ENCODE measurements at regions of chr16 and their contacts with region 1.

Region 1: GRCh38 chr16:69286941-69287713 is 24.0 kb upstream of the VPS4A start:
- DNase-seq: peak; percentile 34 to 63 (median 45)
- ATAC-seq: peak; percentile 50
- H3K4me3 ChIP-seq: no peak overlapping the region
- H3K27ac ChIP-seq: no peak overlapping the region
- H3K4me1 ChIP-seq: peaks cover 3% of the 10 kb centered on the region
- H3K27me3 ChIP-seq: no peaks in the 10 kb centered on the region
- CTCF ChIP-seq: peak; percentile 22 to 71 (median 65)
- POLR2A ChIP-seq: no peak

Region 2: DNA sequence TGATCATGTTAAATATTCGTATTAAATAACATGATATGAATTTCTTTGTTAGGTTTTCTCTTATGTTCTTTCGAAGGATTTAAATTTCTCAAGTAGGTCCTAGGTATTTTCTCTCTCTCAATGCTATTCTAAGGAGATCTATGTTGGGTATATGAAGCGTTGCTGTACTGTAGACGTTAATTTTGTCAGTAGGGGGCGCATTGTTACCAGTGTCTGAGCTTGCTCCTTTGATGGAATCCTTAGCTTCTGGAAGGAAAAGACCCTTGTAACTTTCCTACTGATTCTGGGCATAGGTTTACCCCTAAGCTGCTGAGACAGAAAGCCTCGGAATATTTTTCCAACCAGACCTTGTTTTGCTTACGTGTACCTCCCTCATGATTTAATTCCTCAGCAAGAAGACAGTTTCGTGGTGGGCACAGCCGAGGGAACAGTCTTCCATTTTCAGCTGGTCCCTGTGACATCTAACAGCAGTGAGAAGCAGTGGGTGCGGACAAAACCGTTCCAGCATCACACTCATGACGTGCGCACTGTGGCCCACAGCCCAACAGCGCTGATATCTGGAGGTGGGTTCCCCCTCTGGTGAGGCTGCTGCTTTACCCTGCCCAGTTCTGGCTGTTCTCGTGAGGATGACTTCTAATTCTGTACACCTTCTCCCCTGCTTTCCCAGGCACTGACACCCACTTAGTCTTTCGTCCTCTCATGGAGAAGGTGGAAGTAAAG is 136.8 kb before region 1 on chr16:
- intact Hi-C with region 1: loop called (anchors 2 kb)
- DNase-seq: peak; percentile 58 to 76 (median 63)
- ATAC-seq: peak; percentile 50
- H3K4me3 ChIP-seq: no peak overlapping the region
- H3K27ac ChIP-seq: no peak overlapping the region
- H3K4me1 ChIP-seq: peaks cover 10% of the 10 kb centered on the region
- H3K27me3 ChIP-seq: no peaks in the 10 kb centered on the region
- CTCF ChIP-seq: peak; percentile 66 to 83 (median 76)
- POLR2A ChIP-seq: no peak

Region 3: GRCh38 chr16:69204172-69204571 is 83.0 kb before region 1 on chr16:
- intact Hi-C with region 1: no loop called
- DNase-seq: no peak
- ATAC-seq: no peak
- H3K4me3 ChIP-seq: no peak overlapping the region
- H3K27ac ChIP-seq: no peak overlapping the region
- H3K4me1 ChIP-seq: peaks cover 4% of the 10 kb centered on the region
- H3K27me3 ChIP-seq: no peaks in the 10 kb centered on the region
- CTCF ChIP-seq: no peak
- POLR2A ChIP-seq: no peak

Region 4: DNA sequence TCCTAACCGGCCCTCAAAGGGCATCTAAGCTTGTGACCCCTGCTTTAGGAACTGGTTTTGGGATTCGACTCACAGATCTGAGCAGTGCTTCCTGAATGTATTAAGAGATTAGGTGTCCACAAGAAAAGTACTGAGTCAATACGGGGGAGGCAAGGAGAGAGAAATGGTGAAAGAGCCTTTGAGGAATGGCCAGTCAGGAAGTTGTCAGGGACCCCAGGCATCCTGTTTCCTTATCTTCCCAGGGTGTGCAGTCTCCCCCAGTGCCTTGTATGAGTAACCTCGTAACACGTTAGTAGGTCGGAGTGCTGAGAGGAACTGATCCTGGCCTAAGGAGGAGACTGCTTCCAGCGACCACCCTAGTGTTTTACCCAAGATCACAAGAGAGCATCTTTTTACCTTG is 80.9 kb after region 1 on chr16:
- intact Hi-C with region 1: no loop called
- DNase-seq: no peak
- ATAC-seq: no peak
- H3K4me3 ChIP-seq: no peak overlapping the region
- H3K27ac ChIP-seq: no peak overlapping the region
- H3K4me1 ChIP-seq: no peaks in the 10 kb centered on the region
- H3K27me3 ChIP-seq: no peaks in the 10 kb centered on the region
- CTCF ChIP-seq: no peak
- POLR2A ChIP-seq: no peak